GM12878 (cell line): ENCODE measurements at regions of chr18 and their contacts with region 1.

Region 1: DNA sequence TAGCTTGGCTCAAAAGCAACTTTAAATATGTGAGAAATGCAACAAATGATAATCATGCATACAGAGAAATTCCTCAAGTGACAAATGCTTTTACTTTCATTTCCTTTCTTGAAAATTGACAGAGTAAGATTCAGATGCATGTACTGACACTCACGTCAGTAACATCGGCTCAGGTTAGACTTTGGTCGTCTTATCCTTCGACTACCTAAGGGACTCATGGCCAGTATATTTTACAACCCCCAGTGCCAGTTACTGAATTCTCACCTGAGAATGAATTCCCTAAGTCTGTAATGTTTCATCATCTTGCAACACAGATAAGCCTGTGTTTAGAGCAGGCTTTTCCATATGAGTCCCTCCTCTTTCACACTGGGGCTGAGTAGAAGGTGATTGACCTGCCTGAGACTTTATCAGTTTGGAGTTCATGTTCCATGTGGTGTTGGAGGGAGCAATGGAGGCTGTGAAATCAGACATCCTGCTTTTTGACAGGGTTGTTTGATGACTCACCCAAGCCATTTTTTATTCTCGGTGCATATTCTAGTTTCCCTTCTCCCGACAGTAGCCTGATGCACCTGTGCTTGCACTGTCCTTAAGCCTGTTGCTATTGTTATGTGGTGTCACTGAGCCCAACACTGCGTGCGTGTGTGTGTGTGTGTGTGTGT is 30.5 kb upstream of the ATP8B1 start:
- DNase-seq: peak; percentile 55
- ATAC-seq: peak; percentile 52
- H3K4me3 ChIP-seq: peak overlapping the region; percentile 20; the same call in 1 of the 2 replicates
- H3K27ac ChIP-seq: peak overlapping the region; percentile 82
- H3K4me1 ChIP-seq: peaks cover 20% of the 10 kb centered on the region
- H3K27me3 ChIP-seq: no peaks in the 10 kb centered on the region
- CTCF ChIP-seq: no peak
- EP300 ChIP-seq: no peak
- POLR2A ChIP-seq: no peak
- RAD21 ChIP-seq: no peak

Region 2: DNA sequence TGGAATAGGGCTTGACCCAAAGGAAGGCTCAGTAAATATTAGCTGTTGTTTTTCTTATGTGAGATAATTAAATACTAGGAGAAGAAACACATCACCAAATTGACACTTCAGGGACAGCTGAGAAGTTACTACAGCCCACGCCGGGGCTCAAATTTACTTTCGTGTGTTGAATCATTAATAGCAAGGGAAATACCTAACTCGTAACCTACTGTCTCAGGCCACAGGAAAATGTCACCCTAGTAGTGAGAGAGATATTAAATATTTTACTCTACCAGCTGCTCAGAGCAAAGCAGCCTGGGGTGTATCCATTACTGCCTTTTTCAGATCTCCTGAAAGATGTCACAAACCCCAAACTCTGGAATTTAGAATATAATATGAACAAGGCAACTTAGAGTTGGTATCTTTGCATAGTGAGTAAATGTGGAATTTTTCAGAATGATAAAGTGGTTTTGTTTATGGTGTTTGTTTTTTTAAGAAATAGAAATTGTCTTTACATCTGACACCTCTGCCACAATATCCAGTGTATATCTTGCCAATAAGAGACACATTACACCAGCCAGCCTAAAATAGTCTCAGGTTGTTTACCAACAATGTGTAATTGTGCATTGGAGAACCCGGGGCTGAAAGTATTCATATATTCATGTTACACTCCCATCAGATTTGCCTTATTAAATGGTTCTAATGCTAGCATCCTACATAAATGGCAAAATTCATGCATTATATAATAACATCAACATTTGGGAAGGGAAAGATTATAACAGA is 78.8 kb before region 1 on chr18:
- CTCF ChIA-PET with region 1: interaction called, 4 read pairs
- POLR2A ChIA-PET with region 1: interaction called, 4 read pairs
- RAD21 ChIA-PET with region 1: interaction called, 5 read pairs
- SMC1A ChIA-PET with region 1: interaction called, 5 read pairs
- in situ Hi-C with region 1: no loop called
- intact Hi-C with region 1: loop called (anchors 2 kb)
- DNase-seq: peak; percentile 38
- ATAC-seq: peak; percentile 96
- H3K4me3 ChIP-seq: no peak overlapping the region
- H3K27ac ChIP-seq: no peak overlapping the region
- H3K4me1 ChIP-seq: no peaks in the 10 kb centered on the region
- H3K27me3 ChIP-seq: no peaks in the 10 kb centered on the region
- CTCF ChIP-seq: no peak
- EP300 ChIP-seq: peak in 1 of 2 experiments; percentile 63; a peak in 1 of 4 replicates
- POLR2A ChIP-seq: no peak
- RAD21 ChIP-seq: no peak

Region 3: DNA sequence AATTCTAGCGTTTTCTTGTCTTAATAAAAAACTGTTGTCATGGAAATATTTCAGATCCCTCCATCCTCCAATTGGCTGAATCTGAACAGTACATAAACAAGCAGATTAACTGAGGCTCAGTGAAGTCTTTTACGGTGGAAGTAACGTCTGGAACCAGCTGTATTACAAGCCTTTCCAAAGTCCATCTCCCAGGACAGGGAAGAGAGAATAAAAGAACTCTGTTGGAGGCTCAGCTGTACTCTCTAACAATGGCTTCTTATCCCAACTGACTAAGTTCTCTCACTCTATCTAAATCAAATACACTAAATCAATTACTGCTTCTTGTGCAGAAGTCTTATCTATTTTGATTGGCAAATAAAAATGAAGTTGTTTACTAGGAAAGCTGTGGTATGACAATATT is 190.6 kb after region 1 on chr18:
- CTCF ChIA-PET with region 1: no interaction called
- POLR2A ChIA-PET with region 1: no interaction called
- RAD21 ChIA-PET with region 1: no interaction called
- SMC1A ChIA-PET with region 1: no interaction called
- in situ Hi-C with region 1: no loop called
- intact Hi-C with region 1: no loop called
- DNase-seq: no peak
- ATAC-seq: no peak
- H3K4me3 ChIP-seq: no peak overlapping the region
- H3K27ac ChIP-seq: no peak overlapping the region
- H3K4me1 ChIP-seq: no peaks in the 10 kb centered on the region
- H3K27me3 ChIP-seq: peaks cover 0 to 3% of the 10 kb centered on the region in 2 experiments; a peak in 1 of 4 replicates
- CTCF ChIP-seq: no peak
- EP300 ChIP-seq: no peak
- POLR2A ChIP-seq: no peak
- RAD21 ChIP-seq: no peak